Naive thymus-derived CD4-positive, alpha-beta T cell (primary cell): ENCODE measurements at regions of chr1 and their contacts with region 1.

Region 1: DNA sequence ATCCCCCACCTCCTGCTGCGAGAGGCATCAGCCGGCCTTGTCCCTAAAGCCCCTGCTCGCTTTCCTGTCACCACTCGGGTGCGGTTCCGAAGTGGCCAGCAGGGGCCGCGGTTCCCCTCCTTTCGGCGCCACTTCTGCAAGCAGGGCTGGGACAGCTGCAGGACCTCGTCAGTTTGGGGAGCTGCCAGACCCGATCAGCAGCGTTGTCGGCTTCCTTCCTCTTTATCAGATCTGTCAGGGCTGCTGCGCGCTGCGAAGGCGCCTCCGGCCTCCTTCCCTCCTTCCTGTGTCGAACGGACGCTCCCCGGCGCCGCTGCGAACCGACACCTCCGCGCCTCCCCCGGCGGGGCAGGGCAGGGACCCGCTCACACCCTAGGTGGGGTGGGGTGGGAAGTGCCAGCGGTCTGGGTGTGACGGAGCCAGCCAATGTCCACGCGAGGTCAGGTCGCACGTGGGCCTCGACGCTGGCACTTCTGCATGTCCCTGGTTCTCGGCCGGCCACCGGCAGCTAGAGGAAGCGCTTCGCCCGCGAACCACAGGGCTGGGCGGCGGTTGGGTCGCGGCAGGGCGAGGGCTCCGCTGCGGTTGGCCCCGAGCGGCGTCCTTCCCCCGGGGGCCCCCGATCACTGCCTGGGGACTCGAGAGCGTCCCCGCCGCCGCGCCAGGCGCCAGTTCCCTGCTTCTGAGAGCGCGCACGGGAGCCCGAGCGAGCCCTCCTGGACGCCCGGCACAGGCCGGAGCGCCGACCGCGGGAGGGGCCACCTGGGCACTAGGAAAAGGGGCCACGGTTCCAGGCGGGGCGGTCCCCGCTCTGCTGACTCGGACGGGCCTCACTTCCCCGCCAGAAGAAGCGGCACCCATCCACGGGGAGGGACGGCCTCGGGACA is 81.8 kb downstream of the RUNX3 start:
- DNase-seq: peak; percentile 77 to 91 (median 85)
- ATAC-seq: peak; percentile 94
- H3K4me3 ChIP-seq: peak overlapping the region; percentile 64
- H3K4me3 Mint-ChIP-seq: peak overlapping the region; percentile 72 to 84 (median 79)
- H3K27ac ChIP-seq: peak overlapping the region; percentile 47
- H3K27ac Mint-ChIP-seq: peak overlapping the region; percentile 9 to 80 (median 62)
- H3K4me1 ChIP-seq: peaks cover 7 to 14% of the 10 kb centered on the region in 2 donors
- H3K4me1 Mint-ChIP-seq: peaks cover 0 to 21% (median 11%) of the 10 kb centered on the region in 7 donors
- H3K27me3 ChIP-seq: no peaks in the 10 kb centered on the region
- H3K27me3 Mint-ChIP-seq: peaks cover 0 to 40% (median 0%) of the 10 kb centered on the region in 5 donors

Region 2: GRCh38 chr1:24897767-24898483 is 49.7 kb after region 1 on chr1:
- CTCF ChIA-PET with region 1: interaction called, 5 read pairs
- POLR2A ChIA-PET with region 1: no interaction called
- intact Hi-C with region 1: loop called (anchors 1 to 2 kb)
- DNase-seq: peak in 4 of 9 donors; percentile 24 to 51 (median 28)
- ATAC-seq: peak; percentile 66
- H3K4me3 ChIP-seq: no peak overlapping the region
- H3K4me3 Mint-ChIP-seq: no peak overlapping the region
- H3K27ac ChIP-seq: no peak overlapping the region
- H3K27ac Mint-ChIP-seq: peak overlapping the region in 3 of 9 donors; percentile 66 to 74 (median 69)
- H3K4me1 ChIP-seq: peaks cover 0 to 24% of the 10 kb centered on the region in 2 donors
- H3K4me1 Mint-ChIP-seq: peaks cover 9 to 40% (median 18%) of the 10 kb centered on the region in 7 donors
- H3K27me3 ChIP-seq: no peaks in the 10 kb centered on the region
- H3K27me3 Mint-ChIP-seq: no peaks in the 10 kb centered on the region

Region 3: GRCh38 chr1:24910751-24911650 is 62.8 kb after region 1 on chr1:
- CTCF ChIA-PET with region 1: interaction called, 5 read pairs
- POLR2A ChIA-PET with region 1: interaction called, 3 read pairs
- intact Hi-C with region 1: loop called in 1 of 2 experiments (anchors 5 kb)
- DNase-seq: peak in 5 of 9 donors; percentile 28 to 65 (median 43)
- ATAC-seq: peak; percentile 84
- H3K4me3 ChIP-seq: peak overlapping the region; percentile 28
- H3K4me3 Mint-ChIP-seq: peak overlapping the region in 2 of 10 donors; percentile 34 to 63
- H3K27ac ChIP-seq: peak overlapping the region; percentile 72
- H3K27ac Mint-ChIP-seq: peak overlapping the region; percentile 71 to 93 (median 87)
- H3K4me1 ChIP-seq: peaks cover 5 to 95% of the 10 kb centered on the region in 2 donors
- H3K4me1 Mint-ChIP-seq: peaks cover 26 to 75% (median 47%) of the 10 kb centered on the region in 7 donors
- H3K27me3 ChIP-seq: no peaks in the 10 kb centered on the region
- H3K27me3 Mint-ChIP-seq: no peaks in the 10 kb centered on the region

Region 4: GRCh38 chr1:25037174-25038074 is 189.2 kb after region 1 on chr1:
- CTCF ChIA-PET with region 1: interaction called, 68 read pairs
- POLR2A ChIA-PET with region 1: interaction called, 9 read pairs
- intact Hi-C with region 1: loop called (anchors 1 kb)
- DNase-seq: peak; percentile 39 to 70 (median 56)
- ATAC-seq: peak; percentile 58
- H3K4me3 ChIP-seq: no peak overlapping the region
- H3K4me3 Mint-ChIP-seq: peak overlapping the region in 9 of 10 donors; percentile 1 to 44 (median 17)
- H3K27ac ChIP-seq: no peak overlapping the region
- H3K27ac Mint-ChIP-seq: peak overlapping the region in 8 of 9 donors; percentile 34 to 74 (median 54)
- H3K4me1 ChIP-seq: peaks cover 43 to 57% of the 10 kb centered on the region in 2 donors
- H3K4me1 Mint-ChIP-seq: peaks cover 28 to 42% (median 33%) of the 10 kb centered on the region in 7 donors
- H3K27me3 ChIP-seq: no peaks in the 10 kb centered on the region
- H3K27me3 Mint-ChIP-seq: peaks cover 0 to 12% (median 0%) of the 10 kb centered on the region in 5 donors

Region 5: GRCh38 chr1:25099343-25099951 is 251.2 kb after region 1 on chr1:
- CTCF ChIA-PET with region 1: interaction called, 33 read pairs
- POLR2A ChIA-PET with region 1: no interaction called
- intact Hi-C with region 1: loop called (anchors 1 kb)
- DNase-seq: peak in 1 of 9 donors; percentile 46
- ATAC-seq: peak; percentile 49
- H3K4me3 ChIP-seq: no peak overlapping the region
- H3K4me3 Mint-ChIP-seq: peak overlapping the region in 8 of 10 donors; percentile 2 to 77 (median 55)
- H3K27ac ChIP-seq: no peak overlapping the region
- H3K27ac Mint-ChIP-seq: peak overlapping the region in 7 of 9 donors; percentile 6 to 84 (median 61)
- H3K4me1 ChIP-seq: peaks cover 44 to 73% of the 10 kb centered on the region in 2 donors
- H3K4me1 Mint-ChIP-seq: peaks cover 33 to 74% (median 59%) of the 10 kb centered on the region in 7 donors
- H3K27me3 ChIP-seq: no peaks in the 10 kb centered on the region
- H3K27me3 Mint-ChIP-seq: peaks cover 0 to 4% (median 0%) of the 10 kb centered on the region in 5 donors

Region 6: GRCh38 chr1:25148673-25149300 is 300.5 kb after region 1 on chr1:
- CTCF ChIA-PET with region 1: interaction called, 9 read pairs
- POLR2A ChIA-PET with region 1: no interaction called
- intact Hi-C with region 1: loop called (anchors 1 kb)
- DNase-seq: peak in 5 of 9 donors; percentile 18 to 41 (median 29)
- ATAC-seq: peak; percentile 83
- H3K4me3 ChIP-seq: no peak overlapping the region
- H3K4me3 Mint-ChIP-seq: no peak overlapping the region
- H3K27ac ChIP-seq: no peak overlapping the region
- H3K27ac Mint-ChIP-seq: peak overlapping the region in 1 of 9 donors; percentile 16
- H3K4me1 ChIP-seq: no peaks in the 10 kb centered on the region
- H3K4me1 Mint-ChIP-seq: peaks cover 0 to 6% (median 0%) of the 10 kb centered on the region in 7 donors
- H3K27me3 ChIP-seq: no peaks in the 10 kb centered on the region
- H3K27me3 Mint-ChIP-seq: peaks cover 23 to 57% (median 25%) of the 10 kb centered on the region in 5 donors

Region 7: GRCh38 chr1:25204797-25205480 is 356.7 kb after region 1 on chr1:
- CTCF ChIA-PET with region 1: interaction called, 11 read pairs
- POLR2A ChIA-PET with region 1: no interaction called
- intact Hi-C with region 1: loop called (anchors 1 kb)
- DNase-seq: peak in 6 of 9 donors; percentile 34 to 61 (median 52)
- ATAC-seq: peak; percentile 82
- H3K4me3 ChIP-seq: no peak overlapping the region
- H3K4me3 Mint-ChIP-seq: no peak overlapping the region
- H3K27ac ChIP-seq: no peak overlapping the region
- H3K27ac Mint-ChIP-seq: no peak overlapping the region
- H3K4me1 ChIP-seq: no peaks in the 10 kb centered on the region
- H3K4me1 Mint-ChIP-seq: no peaks in the 10 kb centered on the region
- H3K27me3 ChIP-seq: no peaks in the 10 kb centered on the region
- H3K27me3 Mint-ChIP-seq: peaks cover 0 to 38% (median 0%) of the 10 kb centered on the region in 5 donors